Activated T-helper 2 cell treated with anti-CD3 and anti-CD28 coated beads, Interferon-gamma antibody, Interleukin-2, Interleukin-4, amounts not matched to agents 10 μg/mL and 5 μg/mL and 100 μg/mL, durations not matched to agents 14 hours and 24 hours and 36 hours (primary cell): ENCODE measurements at regions of chr2 and their contacts with region 1.

Region 1: DNA sequence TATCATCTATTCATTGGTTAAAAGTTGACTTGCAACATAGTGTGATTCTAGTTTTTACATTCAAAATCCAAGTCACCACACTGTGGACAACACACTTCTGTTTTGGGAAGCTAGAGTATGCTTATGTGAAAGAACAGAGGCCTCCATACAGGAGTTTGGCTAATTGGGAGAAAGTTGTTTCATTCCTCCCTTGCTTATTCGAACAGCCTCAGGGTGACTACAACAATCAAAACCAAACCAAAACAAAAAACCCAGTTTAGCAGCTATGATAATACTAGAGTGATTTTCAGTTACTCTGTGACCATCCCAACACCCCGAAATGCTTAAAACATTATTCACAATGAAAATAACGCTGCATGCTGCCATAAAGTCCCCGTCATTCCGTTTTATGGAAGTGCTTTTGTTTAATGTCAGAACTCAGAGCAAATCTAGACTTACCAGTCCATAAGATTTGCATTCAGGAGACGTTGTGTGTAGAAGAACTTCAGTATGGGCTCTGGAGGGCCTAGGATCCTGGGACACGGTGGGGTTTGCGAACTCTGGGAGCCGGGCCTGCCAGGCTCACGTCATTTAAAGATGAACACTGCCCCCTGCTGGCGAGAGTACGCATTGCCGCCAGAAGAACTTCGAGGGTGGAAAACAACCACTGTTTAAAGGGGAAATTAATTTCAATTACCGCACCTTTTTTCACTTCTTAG is 111.4 kb downstream of the FTCDNL1 start:
- DNase-seq: peak; percentile 38
- H3K4me3 Mint-ChIP-seq: no peak overlapping the region
- H3K27ac Mint-ChIP-seq: no peak overlapping the region
- H3K4me1 Mint-ChIP-seq: peaks cover 5% of the 10 kb centered on the region
- H3K27me3 Mint-ChIP-seq: peaks cover 22% of the 10 kb centered on the region

Region 2: GRCh38 chr2:199602271-199602895 is 137.2 kb before region 1 on chr2:
- intact Hi-C with region 1: loop called (anchors 2 kb)
- DNase-seq: no peak
- H3K4me3 Mint-ChIP-seq: no peak overlapping the region
- H3K27ac Mint-ChIP-seq: no peak overlapping the region
- H3K4me1 Mint-ChIP-seq: no peaks in the 10 kb centered on the region
- H3K27me3 Mint-ChIP-seq: peaks cover 24% of the 10 kb centered on the region

Region 3: GRCh38 chr2:199955339-199956261 is 216.0 kb after region 1 on chr2 and contains the starts of genes MAIP1 and TYW5:
- intact Hi-C with region 1: no loop called
- DNase-seq: peak; percentile 73
- H3K4me3 Mint-ChIP-seq: peak within 1 kb of the TSS; percentile 93
- H3K27ac Mint-ChIP-seq: peak within 1 kb of the TSS; percentile 79
- H3K4me1 Mint-ChIP-seq: peaks cover 43% of the 10 kb centered on the region
- H3K27me3 Mint-ChIP-seq: no peaks in the 10 kb centered on the region
- total RNA-seq, gene MAIP1: 26.0 and 29.9 TPM in 2 replicates
- total RNA-seq, gene TYW5: 11.0 and 12.3 TPM in 2 replicates